ENCODE measurements at regions of chr2 and their contacts with region 1.

Region 1: DNA sequence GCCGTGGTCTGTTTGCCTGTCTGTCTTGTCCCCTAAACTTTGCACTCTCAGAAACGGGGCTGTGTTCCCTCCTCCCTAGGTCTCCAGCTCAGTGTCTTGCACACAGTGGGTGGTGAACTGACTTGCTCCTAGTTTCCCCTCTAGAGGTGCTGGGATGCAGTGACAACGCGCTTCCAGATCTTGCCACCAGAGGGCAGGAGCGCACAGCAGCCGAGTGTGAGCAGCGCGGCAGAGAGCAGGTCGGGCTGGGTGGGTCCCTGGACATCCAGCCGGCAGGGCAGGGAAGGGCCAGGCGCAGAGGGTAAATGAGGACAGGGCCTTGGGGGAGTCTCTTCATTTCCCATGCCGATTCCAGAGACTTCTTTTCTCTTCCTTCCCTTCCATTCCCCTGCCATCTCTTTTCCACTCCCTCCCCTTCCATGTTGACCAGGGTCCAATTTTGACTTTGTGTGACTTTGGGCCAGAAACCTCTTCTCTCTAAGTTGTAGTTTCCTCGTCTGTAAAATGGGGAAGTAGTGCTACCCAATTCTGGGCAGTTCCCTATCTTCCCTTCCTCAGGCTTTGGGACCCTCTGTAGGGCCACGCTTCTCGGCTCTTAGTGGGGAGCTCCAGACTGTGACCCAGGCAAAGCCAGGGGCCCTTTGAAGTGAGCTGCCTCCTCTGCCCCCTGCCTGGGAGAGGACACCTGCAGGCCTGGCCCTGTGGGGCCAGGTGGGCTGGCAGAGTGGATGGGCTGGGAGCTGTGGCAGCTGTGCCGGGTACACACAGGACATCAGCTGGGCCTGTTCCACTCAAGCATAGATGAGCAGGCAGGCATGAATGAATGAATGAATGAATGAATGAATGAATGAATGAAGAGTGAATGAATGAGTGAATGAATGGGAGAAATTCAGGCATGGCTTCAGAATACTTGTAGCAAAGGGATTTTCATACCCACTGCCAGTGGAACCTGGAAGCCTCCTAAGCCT is 43.3 kb upstream of the TAF1B start:
- DNase-seq: peak; percentile 94
- H3K4me3 Mint-ChIP-seq: no peak overlapping the region
- H3K27ac Mint-ChIP-seq: peak overlapping the region; percentile 36
- H3K4me1 Mint-ChIP-seq: peaks cover 35% of the 10 kb centered on the region
- H3K27me3 Mint-ChIP-seq: no peaks in the 10 kb centered on the region

Region 2: GRCh38 chr2:9142551-9143263 is 657.2 kb before region 1 on chr2:
- CTCF ChIA-PET with region 1: interaction called, 3 read pairs
- POLR2A ChIA-PET with region 1: no interaction called
- intact Hi-C with region 1: loop called (anchors 5 kb)
- DNase-seq: peak; percentile 89
- H3K4me3 Mint-ChIP-seq: no peak overlapping the region
- H3K27ac Mint-ChIP-seq: no peak overlapping the region
- H3K4me1 Mint-ChIP-seq: no peaks in the 10 kb centered on the region
- H3K27me3 Mint-ChIP-seq: peaks cover 14% of the 10 kb centered on the region

Region 3: DNA sequence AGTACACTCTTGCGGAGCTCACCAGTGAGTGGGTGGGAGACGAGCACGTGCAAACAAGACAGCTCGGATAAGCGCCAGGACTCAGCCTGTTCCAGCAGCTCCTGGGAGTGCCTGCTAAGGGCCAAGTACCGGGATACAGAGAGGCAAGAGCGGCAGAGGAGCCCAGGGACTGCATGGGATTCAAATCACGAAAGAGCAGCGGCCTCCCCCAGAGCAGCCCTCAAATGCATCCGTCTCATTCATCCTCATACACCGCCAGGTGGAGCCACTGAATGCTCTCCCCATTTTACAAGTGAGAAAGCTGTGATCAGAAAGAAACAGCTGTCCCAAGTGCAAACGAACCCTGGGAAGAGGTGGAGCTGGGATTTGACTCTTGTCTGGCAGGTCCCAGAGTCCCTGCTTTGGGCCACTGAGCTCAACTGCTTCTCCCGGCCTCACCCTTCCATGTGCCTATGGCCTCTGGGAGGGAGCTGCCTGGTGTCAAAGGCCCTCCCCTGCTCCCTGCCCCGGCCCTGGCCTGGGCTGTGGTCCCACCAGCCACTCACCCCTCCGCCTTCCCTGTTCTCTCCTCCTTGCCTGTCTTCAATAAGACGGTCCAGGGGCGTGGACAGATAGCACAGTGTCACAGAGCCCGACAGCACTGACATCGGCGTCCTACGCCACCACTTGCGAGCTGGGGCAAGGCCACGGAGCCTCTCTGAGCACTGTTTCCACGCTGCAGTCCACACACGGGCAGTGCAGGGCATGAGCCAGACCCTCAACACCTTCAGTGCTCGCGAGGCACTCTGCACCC is 29.4 kb before region 1 on chr2:
- CTCF ChIA-PET with region 1: interaction called, 72 read pairs
- POLR2A ChIA-PET with region 1: interaction called, 3 read pairs
- intact Hi-C with region 1: no loop called
- DNase-seq: peak; percentile 74
- H3K4me3 Mint-ChIP-seq: no peak overlapping the region
- H3K27ac Mint-ChIP-seq: no peak overlapping the region
- H3K4me1 Mint-ChIP-seq: peaks cover 23% of the 10 kb centered on the region
- H3K27me3 Mint-ChIP-seq: no peaks in the 10 kb centered on the region

Region 4: GRCh38 chr2:9778012-9778411 is 21.9 kb before region 1 on chr2:
- CTCF ChIA-PET with region 1: interaction called, 72 read pairs
- POLR2A ChIA-PET with region 1: interaction called, 4 read pairs
- intact Hi-C with region 1: loop called (anchors 1 kb)
- DNase-seq: peak; percentile 55
- H3K4me3 Mint-ChIP-seq: no peak overlapping the region
- H3K27ac Mint-ChIP-seq: peak overlapping the region; percentile 38
- H3K4me1 Mint-ChIP-seq: peaks cover 47% of the 10 kb centered on the region
- H3K27me3 Mint-ChIP-seq: no peaks in the 10 kb centered on the region

Region 5: GRCh38 chr2:9789371-9789968 is 10.5 kb before region 1 on chr2:
- CTCF ChIA-PET with region 1: interaction called, 45 read pairs
- POLR2A ChIA-PET with region 1: interaction called, 3 read pairs
- intact Hi-C with region 1: no loop called
- DNase-seq: no peak
- H3K4me3 Mint-ChIP-seq: no peak overlapping the region
- H3K27ac Mint-ChIP-seq: no peak overlapping the region
- H3K4me1 Mint-ChIP-seq: peaks cover 10% of the 10 kb centered on the region
- H3K27me3 Mint-ChIP-seq: no peaks in the 10 kb centered on the region

Region 6: DNA sequence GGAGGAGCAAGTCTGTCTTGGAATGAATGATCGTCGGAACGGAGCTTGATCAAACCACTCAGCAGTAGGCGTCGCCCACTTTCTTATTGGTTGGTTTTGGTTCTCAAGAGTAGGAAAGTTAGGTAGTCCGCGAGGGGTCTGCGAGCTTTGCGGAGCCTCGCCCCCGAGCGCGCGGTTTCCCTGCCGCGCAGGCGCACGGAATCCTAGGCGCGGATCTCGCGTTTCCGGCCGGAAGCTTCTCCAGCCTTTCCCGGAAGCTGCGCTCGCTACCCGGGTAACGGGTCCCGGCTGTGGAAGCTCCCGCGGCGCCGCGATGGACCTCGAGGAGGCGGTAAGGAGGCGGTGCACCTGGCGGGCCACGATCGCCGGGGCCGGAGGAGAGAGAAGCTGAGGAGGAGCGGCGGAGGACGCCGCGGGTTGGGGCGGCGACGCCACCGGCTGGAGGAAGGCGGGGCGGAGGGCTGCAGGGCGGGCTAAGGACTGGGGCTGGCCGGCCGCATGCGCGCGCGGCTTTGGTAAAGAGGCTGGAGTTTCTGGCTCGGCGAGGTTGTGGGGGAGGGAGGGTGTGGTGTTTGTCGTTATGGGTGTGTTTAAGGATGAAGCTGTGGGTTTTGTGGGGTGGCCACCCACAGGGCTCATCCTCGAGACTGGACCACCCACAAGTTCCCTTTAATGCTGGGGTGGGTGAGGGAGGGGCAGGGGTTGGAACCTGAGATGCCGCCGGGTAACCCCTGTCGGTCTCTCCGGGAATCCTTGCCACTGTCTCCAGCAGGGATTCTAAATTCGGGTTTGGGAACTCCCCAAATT is 43.5 kb after region 1 on chr2 and contains the start of gene TAF1B:
- CTCF ChIA-PET with region 1: interaction called, 18 read pairs
- POLR2A ChIA-PET with region 1: interaction called, 12 read pairs
- intact Hi-C with region 1: no loop called
- DNase-seq: peak; percentile 92
- H3K4me3 Mint-ChIP-seq: peak within 1 kb of the TSS; percentile 91
- H3K27ac Mint-ChIP-seq: peak within 1 kb of the TSS; percentile 89
- H3K4me1 Mint-ChIP-seq: peaks cover 42% of the 10 kb centered on the region
- H3K27me3 Mint-ChIP-seq: no peaks in the 10 kb centered on the region
- total RNA-seq, gene TAF1B: 32.6 TPM

Region 7: DNA sequence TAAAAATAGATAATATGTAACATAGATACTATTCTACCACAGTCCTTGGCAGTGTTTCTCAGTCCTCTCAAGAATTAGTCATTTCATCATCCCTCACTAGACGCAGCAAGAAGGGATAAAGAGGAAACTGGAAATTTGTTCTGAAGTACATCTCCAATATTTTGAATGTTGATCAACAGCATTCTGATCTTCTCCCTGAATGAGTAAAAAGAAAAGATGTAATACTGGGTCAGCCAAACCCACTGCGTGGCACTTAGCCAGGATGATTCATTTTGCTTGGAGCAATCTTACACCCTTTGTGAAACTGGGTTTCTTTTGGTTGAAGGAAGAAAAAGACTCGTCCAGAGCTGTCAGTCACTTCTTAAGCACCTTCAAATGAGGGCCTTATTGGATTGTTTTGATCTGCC is 97.4 kb after region 1 on chr2:
- CTCF ChIA-PET with region 1: interaction called, 11 read pairs
- POLR2A ChIA-PET with region 1: no interaction called
- intact Hi-C with region 1: no loop called
- DNase-seq: peak; percentile 89
- H3K4me3 Mint-ChIP-seq: no peak overlapping the region
- H3K27ac Mint-ChIP-seq: peak overlapping the region; percentile 58
- H3K4me1 Mint-ChIP-seq: peaks cover 25% of the 10 kb centered on the region
- H3K27me3 Mint-ChIP-seq: no peaks in the 10 kb centered on the region

Measured in activated CD4-positive, alpha-beta memory T cell treated with anti-CD3 and anti-CD28 coated beads for 36 hours (primary cell).